Left ventricle myocardium inferior (tissue), 1 donor: ENCODE measurements at regions of chr11 and their contacts with region 1.

Region 1: DNA sequence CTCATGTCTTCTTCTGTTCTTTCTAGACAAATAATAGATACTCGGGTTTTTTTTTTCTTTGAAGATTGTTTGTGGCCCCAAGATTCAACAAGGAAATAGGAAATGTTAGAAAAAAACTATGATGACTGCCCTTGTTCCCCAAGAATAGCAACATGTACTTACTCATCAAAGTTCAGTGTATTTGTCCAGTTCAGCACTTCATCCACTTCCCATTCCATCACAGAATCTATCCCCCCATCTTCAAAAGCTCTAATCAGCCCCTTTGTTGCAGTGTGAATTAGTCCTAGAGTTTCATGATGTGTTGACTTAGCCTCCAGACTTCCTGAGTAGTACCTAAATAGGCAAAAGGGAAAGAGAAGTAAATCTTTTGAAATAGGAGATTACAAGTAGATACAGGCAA is 74.3 kb downstream of the C11orf65 start:
- DNase-seq: no peak
- H3K4me3 ChIP-seq: no peak overlapping the region
- H3K27ac ChIP-seq: no peak overlapping the region
- H3K4me1 ChIP-seq: no peaks in the 10 kb centered on the region
- H3K27me3 ChIP-seq: no peaks in the 10 kb centered on the region
- CTCF ChIP-seq: no peak

Region 2: GRCh38 chr11:108453207-108453835 is 60.3 kb after region 1 on chr11:
- intact Hi-C with region 1: loop called (anchors 10 kb)
- DNase-seq: no peak
- H3K4me3 ChIP-seq: no peak overlapping the region
- H3K27ac ChIP-seq: no peak overlapping the region
- H3K4me1 ChIP-seq: no peaks in the 10 kb centered on the region
- H3K27me3 ChIP-seq: no peaks in the 10 kb centered on the region
- CTCF ChIP-seq: no peak

Region 3: DNA sequence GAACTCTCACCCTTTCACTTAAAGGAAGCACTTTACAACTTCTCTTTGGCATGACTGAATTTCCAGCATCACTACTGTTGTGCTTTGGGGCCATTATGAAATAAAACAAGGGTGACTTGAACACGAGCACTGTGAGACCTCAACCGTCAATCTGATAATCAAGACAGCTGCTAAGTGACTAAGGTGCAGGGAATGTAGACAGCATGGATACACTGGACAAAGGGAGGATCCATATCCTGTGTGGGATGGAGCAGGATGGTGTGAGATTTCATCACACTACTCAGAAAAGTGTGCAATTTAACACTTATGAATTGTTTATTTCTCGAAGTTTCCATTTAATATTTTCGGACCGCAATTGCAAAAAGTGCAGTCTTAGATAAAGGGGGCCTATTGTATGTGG is 216.6 kb after region 1 on chr11:
- intact Hi-C with region 1: no loop called
- DNase-seq: no peak
- H3K4me3 ChIP-seq: no peak overlapping the region
- H3K27ac ChIP-seq: no peak overlapping the region
- H3K4me1 ChIP-seq: no peaks in the 10 kb centered on the region
- H3K27me3 ChIP-seq: peaks cover 5% of the 10 kb centered on the region
- CTCF ChIP-seq: no peak